Dorsolateral prefrontal cortex (tissue), 120 donors: ENCODE measurements at regions of chr5 and their contacts with region 1.

Region 1: GRCh38 chr5:168486136-168486879 is at the start of gene RARS1:
- DNase-seq: peak; percentile 91 to 98 (median 96)
- H3K4me3 ChIP-seq: peak within 1 kb of the TSS; percentile 61 to 100 (median 95)
- H3K27ac ChIP-seq: peak within 1 kb of the TSS in 50 of 59 donors; percentile 7 to 91 (median 68)
- H3K27me3 ChIP-seq: peaks cover 0 to 4% (median 0%) of the 10 kb centered on the region in 45 donors
- CTCF ChIP-seq: peak; percentile 93 to 100 (median 98)
- total RNA-seq, gene RARS1: 37.0 to 79.2 (median 58.6) TPM

Region 2: DNA sequence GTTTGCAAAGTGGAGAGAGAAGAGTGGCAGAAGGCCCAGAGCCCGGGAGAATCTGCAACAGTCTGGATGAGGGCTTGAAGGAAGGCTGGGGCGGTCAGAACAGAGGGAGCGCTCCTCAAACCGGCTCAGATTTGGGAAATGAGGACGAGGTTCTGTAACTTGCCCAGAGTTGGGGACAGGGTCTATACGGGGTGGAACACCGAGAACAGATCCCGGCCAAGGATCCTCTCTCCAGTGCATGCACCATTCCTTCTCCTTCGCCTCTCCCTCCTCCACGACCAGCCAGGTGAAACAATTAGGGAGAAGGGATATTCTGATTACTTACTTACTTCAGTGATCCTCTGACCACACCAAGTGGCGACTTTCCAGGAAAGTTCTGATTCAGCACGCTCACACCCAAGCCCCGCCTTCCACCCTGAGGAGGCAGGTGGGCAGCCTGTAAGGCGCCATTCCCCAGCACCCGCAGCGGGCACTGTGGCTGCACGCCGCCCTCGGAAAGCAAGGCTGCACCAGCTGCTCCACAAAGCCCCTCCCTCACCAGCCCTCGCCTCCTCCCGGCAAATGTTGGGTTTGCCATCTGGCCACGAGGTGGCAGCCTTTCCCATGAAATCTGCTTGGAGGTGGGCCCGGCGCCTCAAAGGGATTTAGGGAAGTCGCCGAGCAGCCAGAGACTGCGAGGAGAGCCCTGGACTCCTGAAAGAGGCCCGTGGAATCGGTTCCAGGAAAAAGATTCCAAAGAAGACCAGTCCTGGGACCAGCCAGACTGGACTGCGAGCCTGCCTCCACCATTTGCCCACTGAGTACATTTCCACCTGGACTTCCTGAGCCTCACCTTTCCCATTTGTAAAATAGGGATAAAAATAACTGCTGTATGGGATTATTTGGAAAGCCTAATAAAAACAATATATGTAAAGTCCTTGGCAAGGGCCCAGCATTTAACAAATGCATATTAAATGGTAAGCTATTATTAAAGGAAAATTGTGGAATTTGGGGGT is 217.1 kb before region 1 on chr5:
- intact Hi-C with region 1: loop called (anchors 1 to 5 kb)
- DNase-seq: peak; percentile 67 to 93 (median 84)
- H3K4me3 ChIP-seq: peak overlapping the region; percentile 13 to 69 (median 46)
- H3K27ac ChIP-seq: peak overlapping the region in 13 of 59 donors; percentile 13 to 75 (median 42)
- H3K27me3 ChIP-seq: no peaks in the 10 kb centered on the region
- CTCF ChIP-seq: peak; percentile 71 to 96 (median 90)